A673 (cell line): ENCODE measurements at regions of chr12 and their contacts with region 1.

Region 1: DNA sequence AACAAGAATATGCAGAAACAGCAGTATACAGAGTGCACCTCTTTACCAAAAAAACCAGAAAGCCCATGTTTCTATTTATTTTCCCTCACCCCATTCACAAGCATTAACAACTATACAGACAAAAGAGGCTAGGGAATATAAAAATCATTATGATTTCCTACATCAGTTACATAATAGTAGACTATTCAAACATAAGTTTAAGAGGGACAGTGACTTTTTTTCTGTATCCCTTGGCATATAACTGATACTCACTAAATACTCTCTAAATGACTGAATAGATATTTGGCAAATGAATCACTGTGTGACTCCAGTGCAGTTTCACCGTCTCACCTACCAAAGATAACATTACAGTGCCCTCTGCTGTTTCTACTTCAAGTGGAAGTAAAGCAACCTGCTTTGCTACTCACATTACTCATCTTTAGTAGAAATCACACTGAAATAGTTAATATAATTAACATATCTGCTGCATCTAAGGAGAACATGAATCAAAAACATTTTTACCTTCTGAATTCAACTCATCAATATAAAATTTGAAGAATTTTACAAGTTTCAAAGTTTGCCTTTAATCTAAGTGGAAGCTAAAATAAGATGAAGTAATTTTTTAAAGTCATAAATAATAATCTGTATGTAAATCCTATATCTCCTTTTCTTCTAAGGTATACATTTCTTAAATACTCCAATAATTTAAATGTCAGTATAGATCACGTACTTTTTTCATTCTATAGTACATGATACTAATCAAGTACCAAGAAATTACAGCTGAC is 103.8 kb downstream of the OSBPL8 start:
- DNase-seq: peak; percentile 82
- H3K4me3 ChIP-seq: peak overlapping the region; percentile 8
- H3K27ac ChIP-seq: no peak overlapping the region
- H3K4me1 ChIP-seq: peaks cover 26% of the 10 kb centered on the region
- H3K27me3 ChIP-seq: no peaks in the 10 kb centered on the region
- CTCF ChIP-seq: peak; percentile 78

Region 2: GRCh38 chr12:75526655-75527511 is 928.9 kb before region 1 on chr12:
- CTCF ChIA-PET with region 1: no interaction called
- POLR2A ChIA-PET with region 1: no interaction called
- intact Hi-C with region 1: loop called (anchors 5 kb)
- DNase-seq: peak; percentile 70
- H3K4me3 ChIP-seq: no peak overlapping the region
- H3K27ac ChIP-seq: no peak overlapping the region
- H3K4me1 ChIP-seq: no peaks in the 10 kb centered on the region
- H3K27me3 ChIP-seq: no peaks in the 10 kb centered on the region
- CTCF ChIP-seq: peak; percentile 67

Region 3: GRCh38 chr12:75623631-75624118 is 832.1 kb before region 1 on chr12:
- CTCF ChIA-PET with region 1: no interaction called
- POLR2A ChIA-PET with region 1: no interaction called
- intact Hi-C with region 1: loop called (anchors 10 kb)
- DNase-seq: peak; percentile 57
- H3K4me3 ChIP-seq: no peak overlapping the region
- H3K27ac ChIP-seq: no peak overlapping the region
- H3K4me1 ChIP-seq: no peaks in the 10 kb centered on the region
- H3K27me3 ChIP-seq: no peaks in the 10 kb centered on the region
- CTCF ChIP-seq: peak; percentile 36; the same call in 1 of the 2 replicates

Region 4: GRCh38 chr12:76055393-76055792 is 400.4 kb before region 1 on chr12:
- CTCF ChIA-PET with region 1: no interaction called
- POLR2A ChIA-PET with region 1: no interaction called
- intact Hi-C with region 1: loop called (anchors 5 kb)
- DNase-seq: no peak
- H3K4me3 ChIP-seq: no peak overlapping the region
- H3K27ac ChIP-seq: no peak overlapping the region
- H3K4me1 ChIP-seq: no peaks in the 10 kb centered on the region
- H3K27me3 ChIP-seq: no peaks in the 10 kb centered on the region
- CTCF ChIP-seq: no peak

Region 5: GRCh38 chr12:76083904-76084862 is 371.6 kb before region 1 on chr12 and contains the start of gene NAP1L1:
- CTCF ChIA-PET with region 1: no interaction called
- POLR2A ChIA-PET with region 1: no interaction called
- intact Hi-C with region 1: loop called (anchors 10 kb)
- DNase-seq: peak; percentile 99
- H3K4me3 ChIP-seq: peak within 1 kb of the TSS; percentile 95
- H3K27ac ChIP-seq: peak within 1 kb of the TSS; percentile 98
- H3K4me1 ChIP-seq: peaks cover 23% of the 10 kb centered on the region
- H3K27me3 ChIP-seq: no peaks in the 10 kb centered on the region
- CTCF ChIP-seq: no peak
- total RNA-seq, gene NAP1L1: 801 and 837 TPM in 2 replicates